ENCODE measurements at regions of chr10 and their contacts with region 1.

Region 1: GRCh38 chr10:22988581-22989360 is 60.9 kb downstream of the ARMC3 start:
- DNase-seq: peak; percentile 71
- H3K4me3 ChIP-seq: no peak overlapping the region
- H3K27ac ChIP-seq: no peak overlapping the region
- H3K4me1 ChIP-seq: no peaks in the 10 kb centered on the region
- H3K27me3 ChIP-seq: peaks cover 7 to 33% of the 10 kb centered on the region in 2 experiments
- CTCF ChIP-seq: peak; percentile 69 to 77
- POLR2A ChIP-seq: no peak

Region 2: DNA sequence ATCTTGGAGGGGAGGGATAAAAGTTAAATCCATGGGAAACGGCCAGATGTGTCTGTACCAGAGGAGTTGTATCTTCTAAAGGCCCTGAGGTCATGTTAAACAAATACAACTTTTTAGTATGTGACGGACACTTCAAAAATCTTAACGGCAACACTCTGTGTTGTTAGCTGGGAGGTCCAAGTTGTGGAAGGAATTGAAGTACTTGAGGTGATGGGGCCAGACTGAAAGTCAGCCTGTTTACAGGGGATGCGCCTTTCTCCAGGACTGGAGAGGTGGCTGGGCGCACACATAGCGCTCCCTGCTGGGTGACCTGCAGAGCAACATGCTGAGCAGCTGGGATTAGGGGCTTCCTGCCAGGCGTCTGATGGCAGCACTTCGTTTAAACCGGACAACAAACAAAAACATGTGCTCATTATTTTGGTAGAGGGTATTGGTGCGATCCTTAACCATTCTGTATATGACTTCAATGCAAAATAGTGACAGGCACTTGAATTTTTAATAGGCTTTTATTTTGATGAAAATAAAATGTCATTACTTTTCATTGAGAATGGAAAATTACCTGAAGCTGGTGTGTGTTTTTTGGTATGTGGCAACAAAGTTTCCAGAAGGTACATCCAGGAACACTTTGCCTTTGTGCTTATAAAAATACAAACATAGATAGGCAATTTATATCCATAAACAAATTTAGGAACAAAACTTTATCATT is 1256.6 kb before region 1 on chr10:
- CTCF ChIA-PET with region 1: no interaction called
- POLR2A ChIA-PET with region 1: no interaction called
- dilution Hi-C with region 1: no loop called
- intact Hi-C with region 1: loop called (anchors 10 kb)
- DNase-seq: peak; percentile 78
- H3K4me3 ChIP-seq: no peak overlapping the region
- H3K27ac ChIP-seq: no peak overlapping the region
- H3K4me1 ChIP-seq: peaks cover 20% of the 10 kb centered on the region
- H3K27me3 ChIP-seq: no peaks in the 10 kb centered on the region
- CTCF ChIP-seq: peak; percentile 93 to 95
- POLR2A ChIP-seq: no peak

Region 3: DNA sequence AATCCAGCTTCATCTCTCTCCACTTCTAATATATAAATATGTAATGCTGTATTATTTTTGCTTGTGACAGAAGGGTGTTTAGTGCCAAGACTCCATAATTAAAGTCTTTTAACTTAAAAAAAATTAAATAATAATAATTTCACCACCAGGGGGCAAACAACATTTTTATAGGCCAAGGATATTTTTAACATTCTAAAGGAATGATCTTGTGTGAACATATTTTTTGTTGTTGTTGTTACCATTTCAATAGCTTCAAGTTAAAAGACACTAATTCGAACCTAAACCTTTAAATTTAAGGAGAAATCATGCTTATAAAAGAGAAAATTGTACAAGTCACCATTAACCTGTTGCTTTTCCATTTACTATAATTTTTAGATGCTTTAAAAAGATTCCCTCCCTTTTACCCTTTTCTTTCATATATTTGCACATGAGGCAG is 977.8 kb before region 1 on chr10:
- CTCF ChIA-PET with region 1: interaction called, 51 read pairs
- POLR2A ChIA-PET with region 1: no interaction called
- dilution Hi-C with region 1: no loop called
- intact Hi-C with region 1: loop called (anchors 1 kb)
- DNase-seq: peak; percentile 33
- H3K4me3 ChIP-seq: no peak overlapping the region
- H3K27ac ChIP-seq: no peak overlapping the region
- H3K4me1 ChIP-seq: no peaks in the 10 kb centered on the region
- H3K27me3 ChIP-seq: peaks cover 2 to 29% of the 10 kb centered on the region in 2 experiments
- CTCF ChIP-seq: no peak
- POLR2A ChIP-seq: no peak

Region 4: DNA sequence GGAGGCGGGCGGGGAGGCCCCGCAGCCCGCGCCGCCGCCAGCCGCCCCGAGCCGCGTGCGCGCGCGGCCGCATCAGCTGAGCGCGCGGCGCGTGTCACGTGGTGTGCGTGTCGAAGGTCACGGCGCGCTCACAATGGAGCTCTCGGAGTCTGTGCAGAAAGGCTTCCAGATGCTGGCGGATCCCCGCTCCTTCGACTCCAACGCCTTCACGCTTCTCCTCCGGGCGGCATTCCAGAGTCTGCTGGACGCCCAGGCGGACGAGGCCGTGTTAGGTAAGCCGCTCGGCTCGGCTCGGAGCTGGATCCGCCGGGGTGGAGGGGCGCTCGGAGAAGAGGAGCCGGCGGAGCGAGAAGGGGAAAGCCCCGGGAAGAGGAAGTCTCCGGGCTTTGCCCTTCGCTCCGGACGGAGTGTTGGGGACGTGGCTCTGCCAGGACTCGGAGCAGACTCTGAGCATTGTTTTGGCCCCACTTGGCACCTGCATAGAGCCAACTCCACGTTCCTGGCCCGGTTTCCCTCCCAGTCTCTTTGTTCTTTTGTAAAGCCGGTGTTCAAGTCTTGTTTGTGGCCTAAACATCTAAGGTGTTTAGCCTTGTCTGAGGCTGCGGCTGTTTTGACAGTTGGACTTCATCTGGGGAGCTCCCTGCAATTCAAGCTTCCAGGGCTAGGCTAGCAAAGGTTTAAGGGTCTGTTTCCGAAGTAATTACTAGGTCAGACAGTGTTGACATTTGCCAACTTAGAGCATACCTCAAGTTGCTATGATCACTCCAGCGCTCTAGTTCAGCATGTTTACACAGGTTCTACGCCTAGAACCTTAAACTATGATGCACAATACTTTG is 672.3 kb before region 1 on chr10 and contains the start of gene COMMD3:
- CTCF ChIA-PET with region 1: interaction called, 8 read pairs
- POLR2A ChIA-PET with region 1: no interaction called
- dilution Hi-C with region 1: no loop called
- intact Hi-C with region 1: loop called (anchors 5 kb)
- DNase-seq: peak; percentile 88
- H3K4me3 ChIP-seq: peak within 1 kb of the TSS; percentile 67 to 93 (median 83)
- H3K27ac ChIP-seq: peak within 1 kb of the TSS; percentile 69
- H3K4me1 ChIP-seq: peaks cover 17% of the 10 kb centered on the region
- H3K27me3 ChIP-seq: no peaks in the 10 kb centered on the region
- CTCF ChIP-seq: no peak
- POLR2A ChIP-seq: peak; percentile 89
- total RNA-seq, gene COMMD3: 48.9 and 49.8 TPM in 2 replicates

Region 5: DNA sequence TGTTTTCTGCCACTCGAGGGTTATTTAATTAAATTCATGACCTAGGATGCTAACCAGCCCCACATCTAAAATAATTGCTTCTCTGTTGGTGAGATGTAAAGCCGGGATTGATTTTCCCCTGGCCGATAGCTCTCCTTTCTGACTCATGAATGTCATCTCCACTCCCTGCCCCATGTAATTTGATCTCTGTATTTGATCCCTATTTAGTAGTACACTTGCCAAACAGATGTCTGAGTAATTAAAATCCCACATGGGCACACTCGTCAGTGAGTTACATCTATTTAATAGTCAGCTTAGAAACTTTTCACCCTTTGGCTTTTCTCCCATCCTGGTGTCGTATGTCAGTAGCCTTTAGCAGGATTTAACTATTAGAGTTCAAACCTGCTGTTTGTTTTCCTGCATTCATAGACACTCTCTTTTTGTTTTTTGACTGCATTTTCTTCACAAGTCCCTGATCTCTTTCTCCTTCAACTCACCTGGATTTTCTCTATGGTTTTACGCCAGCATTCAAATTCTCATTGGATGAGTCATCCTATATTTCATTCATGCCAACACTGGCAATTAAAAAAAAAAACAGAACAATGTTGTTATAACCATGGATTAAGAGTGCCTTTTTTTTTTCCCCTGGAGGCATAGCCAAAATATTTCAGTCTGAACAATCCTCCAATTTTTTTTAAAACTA is 560.7 kb before region 1 on chr10:
- CTCF ChIA-PET with region 1: interaction called, 10 read pairs
- POLR2A ChIA-PET with region 1: no interaction called
- dilution Hi-C with region 1: no loop called
- intact Hi-C with region 1: loop called (anchors 5 kb)
- DNase-seq: peak; percentile 77
- H3K4me3 ChIP-seq: no peak overlapping the region
- H3K27ac ChIP-seq: no peak overlapping the region
- H3K4me1 ChIP-seq: peaks cover 27% of the 10 kb centered on the region
- H3K27me3 ChIP-seq: no peaks in the 10 kb centered on the region
- CTCF ChIP-seq: no peak
- POLR2A ChIP-seq: no peak

Region 6: DNA sequence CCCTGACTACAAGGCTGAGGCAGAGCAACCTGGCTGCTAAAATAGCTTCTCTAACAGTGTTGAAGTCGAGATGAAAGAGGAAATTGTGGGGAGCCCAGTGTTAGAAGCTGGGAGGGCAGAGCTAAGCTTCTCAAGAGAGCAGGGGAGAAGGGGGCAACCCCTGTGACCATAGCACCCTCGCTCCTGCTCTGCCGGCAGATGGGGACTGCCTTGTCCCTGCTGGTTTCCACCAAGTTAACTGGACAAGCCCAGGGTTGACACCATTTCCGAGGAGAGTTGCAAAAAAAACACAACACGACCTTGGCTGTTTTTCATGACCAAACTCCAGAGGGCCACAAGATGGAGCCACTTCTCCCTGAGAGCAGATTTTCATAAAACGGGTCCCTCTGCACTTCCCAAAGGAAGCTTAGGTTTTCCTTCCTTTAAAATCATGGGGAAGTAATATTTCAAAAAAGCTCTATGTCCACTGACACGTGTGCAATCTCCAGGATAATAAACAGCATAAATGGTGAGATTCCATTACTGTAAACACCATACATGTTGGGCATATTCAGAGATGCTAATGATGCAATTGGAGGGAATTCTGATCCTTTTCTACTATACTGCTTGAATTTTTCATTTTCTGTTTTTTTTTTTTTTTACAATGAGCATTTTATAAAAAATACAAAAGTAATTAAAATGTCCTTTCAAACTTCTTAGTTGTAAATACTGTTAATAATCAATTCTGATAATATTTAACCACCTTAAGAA is 414.8 kb before region 1 on chr10:
- CTCF ChIA-PET with region 1: interaction called, 76 read pairs
- POLR2A ChIA-PET with region 1: no interaction called
- dilution Hi-C with region 1: no loop called
- intact Hi-C with region 1: loop called (anchors 1 kb)
- DNase-seq: peak; percentile 18
- H3K4me3 ChIP-seq: no peak overlapping the region
- H3K27ac ChIP-seq: no peak overlapping the region
- H3K4me1 ChIP-seq: no peaks in the 10 kb centered on the region
- H3K27me3 ChIP-seq: no peaks in the 10 kb centered on the region
- CTCF ChIP-seq: peak; percentile 44 to 52
- POLR2A ChIP-seq: no peak

Region 7: DNA sequence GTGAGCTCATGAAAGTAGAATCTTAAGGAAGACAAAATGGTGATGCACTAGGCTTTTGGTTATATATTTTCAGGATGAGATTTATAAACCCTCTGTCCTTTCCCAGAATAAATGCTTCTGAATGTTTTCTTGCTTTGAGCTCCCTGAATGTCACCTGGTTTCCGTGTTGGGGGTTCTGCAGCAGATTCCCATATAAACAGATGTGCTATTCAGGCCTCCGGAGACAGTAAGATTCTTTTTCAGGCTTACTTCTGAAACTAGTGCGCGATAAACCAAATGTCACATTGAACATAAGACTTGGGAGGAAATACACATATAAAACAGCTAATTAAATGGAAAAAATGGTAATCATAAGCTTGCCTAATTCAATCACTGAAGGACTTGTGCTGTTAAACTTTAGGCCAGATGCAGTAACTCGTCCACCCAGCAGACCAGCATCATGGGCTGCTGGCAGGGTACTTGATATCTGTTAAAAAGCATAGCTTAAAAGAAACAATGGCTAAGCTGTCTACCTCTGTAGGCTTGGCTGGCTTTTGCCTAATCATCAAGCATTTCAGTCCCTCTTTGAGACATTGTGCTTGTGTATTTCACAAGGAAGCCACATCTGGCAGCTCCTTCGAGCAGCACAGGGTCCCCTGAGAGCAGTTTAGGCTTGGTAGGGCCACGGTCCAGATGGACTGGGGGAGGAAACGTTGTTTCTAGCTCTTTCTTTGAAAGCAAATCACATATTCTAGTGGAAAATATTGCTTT is 939.0 kb after region 1 on chr10:
- CTCF ChIA-PET with region 1: no interaction called
- POLR2A ChIA-PET with region 1: no interaction called
- dilution Hi-C with region 1: no loop called
- intact Hi-C with region 1: no loop called
- DNase-seq: no peak
- H3K4me3 ChIP-seq: no peak overlapping the region
- H3K27ac ChIP-seq: no peak overlapping the region
- H3K4me1 ChIP-seq: no peaks in the 10 kb centered on the region
- H3K27me3 ChIP-seq: no peaks in the 10 kb centered on the region
- CTCF ChIP-seq: no peak
- POLR2A ChIP-seq: no peak

Region 8: DNA sequence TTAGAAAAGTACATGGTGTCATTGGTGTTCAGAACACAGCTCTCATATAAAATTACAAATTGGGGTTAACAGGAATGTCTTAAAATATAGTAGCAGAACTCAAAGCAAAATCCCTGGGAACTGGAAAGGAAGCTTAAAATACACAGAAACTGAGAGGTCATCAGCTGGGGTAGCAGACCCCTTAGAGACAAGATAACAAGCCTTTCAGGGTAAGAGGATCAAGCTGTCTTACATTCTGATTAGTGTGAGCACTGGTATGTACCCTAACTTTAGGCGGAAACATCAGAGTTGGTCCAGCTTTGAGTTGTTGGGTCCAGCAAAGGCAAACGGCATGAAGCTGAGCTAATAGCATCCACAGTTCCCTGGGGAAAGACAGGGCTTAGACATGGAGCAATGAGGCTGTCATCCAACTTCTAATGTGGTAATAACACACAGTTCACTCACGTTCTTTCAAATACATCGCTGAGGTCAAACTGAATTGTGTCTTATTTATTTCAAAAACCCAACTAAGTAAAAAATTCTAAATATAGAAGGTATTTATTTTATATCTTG is 1702.3 kb after region 1 on chr10:
- CTCF ChIA-PET with region 1: no interaction called
- POLR2A ChIA-PET with region 1: no interaction called
- dilution Hi-C with region 1: no loop called
- intact Hi-C with region 1: no loop called
- DNase-seq: no peak
- H3K4me3 ChIP-seq: no peak overlapping the region
- H3K27ac ChIP-seq: no peak overlapping the region
- H3K4me1 ChIP-seq: no peaks in the 10 kb centered on the region
- H3K27me3 ChIP-seq: no peaks in the 10 kb centered on the region
- CTCF ChIP-seq: no peak
- POLR2A ChIP-seq: no peak